ENCODE measurements at regions of chr3 and their contacts with region 1.

Region 1: DNA sequence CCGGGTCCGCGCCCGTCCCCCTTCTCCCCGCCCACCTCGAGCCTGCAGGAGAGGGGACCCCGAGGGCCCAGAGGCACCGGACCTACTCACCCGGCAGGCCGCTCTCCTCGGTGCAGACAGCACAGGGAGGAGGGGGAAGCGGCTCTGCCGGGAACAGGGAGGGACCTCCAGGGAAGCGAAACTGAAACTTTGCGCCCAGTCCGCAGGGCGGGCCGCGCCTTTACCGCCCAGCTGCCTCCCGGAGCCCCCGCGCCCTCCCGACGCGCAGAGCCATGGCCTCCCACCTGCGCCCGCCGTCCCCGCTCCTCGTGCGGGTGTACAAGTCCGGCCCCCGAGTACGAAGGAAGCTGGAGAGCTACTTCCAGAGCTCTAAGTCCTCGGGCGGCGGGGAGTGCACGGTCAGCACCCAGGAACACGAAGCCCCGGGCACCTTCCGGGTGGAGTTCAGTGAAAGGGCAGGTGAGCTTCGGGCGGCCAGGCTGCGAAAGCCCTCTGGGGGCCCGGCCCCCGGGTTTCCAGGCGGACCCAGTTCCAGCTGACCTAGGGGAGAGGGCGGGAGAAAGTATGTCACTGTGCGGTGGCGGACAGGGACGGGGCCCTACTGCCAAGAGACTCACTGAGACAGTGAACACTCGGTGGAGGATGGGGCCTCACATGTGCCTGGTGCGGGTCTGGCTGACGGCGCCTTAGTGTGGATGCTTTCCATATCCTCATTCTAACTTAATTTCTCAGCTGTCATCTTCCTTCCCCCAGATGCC is at the starts of genes DTX3L and PARP9:
- DNase-seq: peak; percentile 93
- ATAC-seq: peak; percentile 97
- total RNA-seq, gene DTX3L: 14.6 TPM
- total RNA-seq, gene PARP9: 14.0 TPM

Region 2: GRCh38 chr3:122793568-122794416 is 229.5 kb after region 1 on chr3 and contains the start of gene HSPBAP1:
- intact Hi-C with region 1: loop called (anchors 10 kb)
- DNase-seq: peak; percentile 97
- ATAC-seq: peak; percentile 79
- total RNA-seq, gene HSPBAP1: 4.9 TPM